Astrocyte of the cerebellum (primary cell): ENCODE measurements at regions of chr1 and their contacts with region 1.

Region 1: DNA sequence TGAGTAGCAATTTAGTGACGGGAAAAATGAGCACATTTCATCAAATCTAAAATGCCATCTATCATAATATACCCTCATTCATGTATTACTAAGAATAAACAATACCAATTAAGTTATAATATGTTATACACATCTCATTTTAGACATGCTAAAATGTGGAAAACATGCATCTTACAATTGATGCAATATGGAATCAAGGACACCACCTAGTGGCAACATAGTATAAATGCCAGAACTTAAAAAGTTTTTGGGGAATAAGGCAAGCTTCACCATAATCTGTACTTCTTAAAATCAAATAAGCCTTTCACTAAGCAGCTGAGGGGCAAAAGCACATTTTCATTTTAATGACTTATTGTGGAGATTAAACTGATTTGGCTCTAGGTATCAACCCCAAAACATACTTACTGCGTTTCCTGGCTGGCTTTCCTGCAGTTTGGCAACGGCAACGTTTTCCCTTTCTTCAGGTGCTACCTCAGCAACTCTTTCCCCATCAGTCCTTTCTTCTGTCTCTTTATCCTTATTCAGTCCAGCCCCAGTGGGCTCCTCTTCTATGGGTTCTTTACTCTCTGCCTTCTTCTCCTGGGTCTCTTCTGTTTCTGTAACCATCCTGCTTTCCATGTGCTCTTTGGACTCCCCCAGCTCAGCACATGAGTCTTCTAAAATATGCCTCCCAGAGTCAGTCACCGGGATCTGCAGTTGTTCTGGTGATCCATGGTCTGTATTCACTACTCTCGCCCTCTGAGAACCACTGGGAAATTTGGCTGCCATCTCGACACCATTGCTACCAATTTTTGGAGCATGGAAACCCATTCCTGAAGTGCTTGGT is 11.4 kb downstream of the SDE2 start:
- DNase-seq: peak; percentile 41
- H3K4me3 ChIP-seq: no peak overlapping the region
- CTCF ChIP-seq: peak; percentile 50

Region 2: GRCh38 chr1:225866061-225866837 is 121.5 kb before region 1 on chr1:
- in situ Hi-C with region 1: no loop called
- DNase-seq: peak; percentile 60
- H3K4me3 ChIP-seq: no peak overlapping the region
- CTCF ChIP-seq: no peak

Region 3: GRCh38 chr1:225881969-225882693 is 105.6 kb before region 1 on chr1 and contains the start of gene TMEM63A:
- in situ Hi-C with region 1: loop called (anchors 5 kb)
- DNase-seq: peak; percentile 48
- H3K4me3 ChIP-seq: peak within 1 kb of the TSS; percentile 93
- CTCF ChIP-seq: no peak